Mammary epithelial cell (primary cell): ENCODE measurements at regions of chr2 and their contacts with region 1.

Region 1: DNA sequence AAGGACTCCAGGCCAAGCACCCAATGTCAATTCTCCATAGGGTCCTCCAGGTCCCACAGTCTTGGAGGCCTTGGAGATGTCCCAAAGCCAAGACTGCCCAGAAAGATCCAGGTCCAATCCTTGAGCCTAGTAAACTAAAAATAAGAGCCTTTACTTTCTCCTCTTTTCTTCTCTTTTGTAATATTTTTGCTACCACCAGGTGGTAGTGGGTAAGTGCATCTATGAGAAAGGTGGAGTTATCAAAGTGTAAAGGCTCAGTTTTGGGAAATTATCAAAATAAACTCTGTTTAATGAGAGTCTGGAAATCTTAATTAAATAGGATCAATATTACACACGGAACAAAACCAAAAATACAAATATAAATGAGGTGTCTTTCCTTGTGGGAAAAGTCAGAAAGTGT is 276.4 kb downstream of the ALK start:
- DNase-seq: no peak
- H3K4me3 ChIP-seq: no peak overlapping the region
- H3K27ac ChIP-seq: no peak overlapping the region
- H3K4me1 ChIP-seq: peaks cover 14% of the 10 kb centered on the region
- H3K27me3 ChIP-seq: no peaks in the 10 kb centered on the region
- CTCF ChIP-seq: peak in 1 of 2 donors; percentile 23

Region 2: DNA sequence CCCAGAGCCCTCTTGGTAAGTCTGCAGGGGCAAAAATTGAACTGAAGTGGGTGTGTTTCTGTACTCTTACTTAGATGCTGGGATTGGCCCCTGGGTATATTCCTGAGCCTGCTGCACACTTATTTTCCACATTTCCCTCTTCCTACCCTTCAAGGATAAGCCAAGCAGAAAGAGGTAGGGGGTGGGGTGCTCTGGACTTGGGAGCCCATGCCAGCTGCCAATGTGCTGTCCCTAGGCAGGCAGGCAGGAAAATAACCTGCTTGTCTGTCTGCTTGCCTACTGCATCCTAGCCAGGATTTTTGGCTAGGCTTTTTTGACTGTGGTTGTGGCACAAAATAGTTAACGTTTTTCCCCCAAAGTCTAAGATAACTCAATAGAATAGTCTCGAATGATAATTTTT is 42.2 kb after region 1 on chr2:
- CTCF ChIA-PET with region 1: no interaction called
- dilution Hi-C with region 1: loop called (anchors 5 kb)
- in situ Hi-C with region 1: no loop called
- intact Hi-C with region 1: no loop called
- DNase-seq: no peak
- H3K4me3 ChIP-seq: no peak overlapping the region
- H3K27ac ChIP-seq: no peak overlapping the region
- H3K4me1 ChIP-seq: no peaks in the 10 kb centered on the region
- H3K27me3 ChIP-seq: no peaks in the 10 kb centered on the region
- CTCF ChIP-seq: no peak

Region 3: GRCh38 chr2:29821591-29821990 is 176.6 kb after region 1 on chr2:
- CTCF ChIA-PET with region 1: no interaction called
- dilution Hi-C with region 1: no loop called
- in situ Hi-C with region 1: no loop called
- intact Hi-C with region 1: loop called (anchors 5 kb)
- DNase-seq: no peak
- H3K4me3 ChIP-seq: no peak overlapping the region
- H3K27ac ChIP-seq: no peak overlapping the region
- H3K4me1 ChIP-seq: no peaks in the 10 kb centered on the region
- H3K27me3 ChIP-seq: no peaks in the 10 kb centered on the region
- CTCF ChIP-seq: no peak

Region 4: GRCh38 chr2:29834624-29835023 is 189.7 kb after region 1 on chr2:
- CTCF ChIA-PET with region 1: no interaction called
- dilution Hi-C with region 1: no loop called
- in situ Hi-C with region 1: no loop called
- intact Hi-C with region 1: no loop called
- DNase-seq: peak; percentile 38
- H3K4me3 ChIP-seq: no peak overlapping the region
- H3K27ac ChIP-seq: no peak overlapping the region
- H3K4me1 ChIP-seq: no peaks in the 10 kb centered on the region
- H3K27me3 ChIP-seq: peaks cover 4% of the 10 kb centered on the region
- CTCF ChIP-seq: no peak